ENCODE measurements at regions of chr12 and their contacts with region 1.

Region 1: DNA sequence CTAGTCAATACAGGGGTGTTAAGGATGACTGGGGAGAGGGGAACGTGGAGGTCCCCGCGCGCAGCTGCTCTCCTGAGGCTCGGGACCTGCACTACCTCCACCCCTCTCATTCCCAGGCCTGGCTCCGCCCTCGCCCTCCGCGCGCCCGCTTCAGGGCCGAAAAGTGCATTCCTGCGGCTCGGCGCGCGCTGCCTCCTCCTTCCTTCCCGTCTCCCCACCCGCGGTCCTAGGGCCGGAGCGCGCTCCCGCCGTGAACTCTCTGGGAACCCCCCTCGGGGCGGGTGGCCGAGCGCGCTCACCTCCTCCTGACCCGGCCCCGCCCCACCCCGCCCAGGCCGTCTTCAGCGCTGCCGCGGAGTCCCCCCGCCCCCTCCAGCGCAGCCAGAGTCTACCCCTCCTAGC is 11.2 kb downstream of the RARG start:
- DNase-seq: peak; percentile 96 to 97
- ATAC-seq: peak; percentile 91
- H3K4me3 ChIP-seq: peak overlapping the region; percentile 68 to 78
- H3K27ac ChIP-seq: peak overlapping the region; percentile 85 to 90
- H3K4me1 ChIP-seq: no peaks in the 10 kb centered on the region
- H3K27me3 ChIP-seq: no peaks in the 10 kb centered on the region

Region 2: GRCh38 chr12:53231826-53232645 is 11.2 kb after region 1 on chr12 and contains the start of gene RARG:
- intact Hi-C with region 1: loop called in 1 of 2 experiments (anchors 1 kb)
- DNase-seq: peak; percentile 84 to 92
- ATAC-seq: peak; percentile 88
- H3K4me3 ChIP-seq: peak within 1 kb of the TSS; percentile 55 to 84
- H3K27ac ChIP-seq: peak within 1 kb of the TSS; percentile 79 to 91
- H3K4me1 ChIP-seq: peaks cover 0 to 6% of the 10 kb centered on the region in 2 donors
- H3K27me3 ChIP-seq: no peaks in the 10 kb centered on the region
- total RNA-seq, gene RARG: 32.7 to 63.9 TPM

Region 3: DNA sequence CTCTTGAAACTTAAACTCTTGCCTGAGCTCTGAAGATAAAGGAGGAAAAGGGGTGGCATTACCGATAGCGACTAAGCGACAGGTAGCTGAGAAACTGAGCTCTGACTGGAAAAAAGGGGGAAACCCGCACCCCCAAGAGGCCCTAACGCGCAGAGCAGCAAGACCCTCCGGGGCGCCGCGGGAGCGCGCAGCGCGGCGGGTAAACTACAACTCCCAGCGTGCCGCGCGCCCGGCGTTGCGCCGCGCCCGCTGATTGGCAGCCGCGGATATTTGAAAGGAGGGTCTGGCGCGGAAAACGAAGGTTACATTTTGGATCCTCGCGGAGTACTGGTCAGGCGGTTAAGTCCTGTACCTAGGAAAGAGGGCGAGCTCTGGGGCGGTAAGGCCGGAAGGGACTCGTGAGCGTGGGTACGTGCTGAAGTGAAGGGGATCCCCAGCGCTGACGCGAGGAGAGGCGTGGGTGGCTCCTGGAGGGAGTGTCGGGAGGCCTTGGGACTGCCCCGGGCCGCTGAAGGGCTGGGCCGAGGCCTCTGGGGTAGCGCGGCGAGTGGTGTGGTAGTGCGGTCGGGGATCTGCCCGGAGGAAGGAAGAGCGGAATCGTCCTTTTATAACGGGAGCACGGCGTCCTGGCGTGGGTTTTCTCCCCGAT is 47.3 kb after region 1 on chr12 and contains the start of gene ESPL1:
- intact Hi-C with region 1: loop called in 1 of 2 experiments (anchors 5 kb)
- DNase-seq: peak; percentile 81 to 90
- ATAC-seq: peak; percentile 94
- H3K4me3 ChIP-seq: peak within 1 kb of the TSS; percentile 42 to 66
- H3K27ac ChIP-seq: no peak within 1 kb of the TSS
- H3K4me1 ChIP-seq: no peaks in the 10 kb centered on the region
- H3K27me3 ChIP-seq: no peaks in the 10 kb centered on the region
- total RNA-seq, gene ESPL1: 0.49 to 2.8 TPM

Measured in aorta (tissue), 5 donors.